ENCODE measurements at regions of chr11 and their contacts with region 1.

Region 1: DNA sequence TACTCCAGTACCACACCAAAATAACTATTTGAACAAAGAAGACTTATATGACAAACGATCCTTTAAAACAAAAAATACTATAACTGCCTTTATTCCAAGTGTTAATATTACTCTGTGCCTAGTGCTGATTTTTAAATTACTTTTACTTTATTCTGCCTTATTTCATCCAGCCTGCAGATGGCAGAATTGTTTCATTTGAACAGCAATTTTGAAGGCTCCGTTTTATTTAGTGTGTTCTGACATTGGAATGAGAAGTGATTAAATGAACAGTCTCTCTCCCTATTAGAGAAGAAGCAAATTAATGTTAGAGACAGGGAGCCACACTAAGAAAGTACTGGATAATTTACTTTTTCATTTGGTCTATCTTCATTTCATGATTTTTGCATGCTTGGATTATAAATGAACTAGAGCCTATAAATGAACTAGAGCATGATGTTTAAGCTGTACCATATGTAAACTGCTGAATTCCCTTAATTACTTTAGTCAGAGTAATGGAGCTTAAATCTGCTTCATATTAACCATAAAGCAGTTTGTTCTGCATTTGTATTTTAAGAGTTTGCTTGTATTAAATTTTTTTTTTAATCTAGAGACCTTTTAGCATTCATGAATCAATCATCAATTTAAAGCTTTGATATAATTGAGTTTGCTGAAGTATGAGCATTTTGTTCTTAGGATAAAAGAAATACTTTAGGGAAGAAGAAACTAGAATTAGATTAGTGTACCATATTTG is 9.8 kb downstream of the PDHX start:
- DNase-seq: no peak

Region 2: GRCh38 chr11:34825670-34826383 is 100.4 kb before region 1 on chr11:
- intact Hi-C with region 1: no loop called
- DNase-seq: no peak

Region 3: GRCh38 chr11:34860034-34860433 is 66.2 kb before region 1 on chr11:
- intact Hi-C with region 1: no loop called
- DNase-seq: no peak

Region 4: DNA sequence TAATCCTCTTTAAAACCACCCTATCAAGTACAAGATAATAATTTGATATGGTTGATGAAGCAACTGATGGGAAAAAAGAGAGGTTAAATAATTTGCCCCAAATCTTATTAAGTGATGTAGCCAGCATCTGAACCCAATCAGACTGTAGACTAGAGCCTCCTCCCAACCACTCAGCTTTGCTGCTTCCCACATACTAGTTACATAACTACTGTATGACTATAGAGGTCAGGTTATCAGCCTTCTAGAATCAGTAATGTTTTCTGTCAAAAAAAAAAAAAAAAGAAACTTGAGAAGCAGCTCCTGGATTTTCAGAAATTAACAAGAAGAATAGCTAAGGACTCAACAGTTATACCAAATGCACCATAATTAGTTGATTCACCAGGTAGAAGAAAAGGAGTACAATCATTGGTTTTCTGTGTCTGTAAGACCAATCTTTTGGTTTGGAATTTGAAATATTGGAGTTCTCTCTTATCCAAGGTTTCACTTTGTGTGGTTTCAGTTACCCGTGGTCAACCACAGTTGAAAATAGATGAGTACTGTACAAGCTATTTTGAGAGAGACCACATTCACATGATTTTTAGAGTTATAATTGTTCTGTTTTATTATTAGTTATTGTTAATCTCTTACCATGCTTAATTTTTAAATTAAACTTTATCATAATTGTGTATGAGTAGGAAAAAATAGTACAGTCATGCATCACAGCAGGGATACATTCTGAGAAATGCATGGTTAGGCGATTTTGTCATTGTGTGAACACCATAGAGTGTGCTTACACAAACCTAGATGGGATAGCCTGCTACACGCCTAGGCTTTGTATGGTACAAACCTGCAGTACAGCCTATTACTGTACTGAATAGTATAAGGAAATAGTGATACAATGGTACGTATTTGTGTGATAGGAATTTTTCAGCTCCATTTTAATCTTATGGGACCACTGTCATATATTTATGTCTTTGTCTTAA is 62.3 kb after region 1 on chr11:
- intact Hi-C with region 1: loop called (anchors 10 kb)
- DNase-seq: no peak

Region 5: DNA sequence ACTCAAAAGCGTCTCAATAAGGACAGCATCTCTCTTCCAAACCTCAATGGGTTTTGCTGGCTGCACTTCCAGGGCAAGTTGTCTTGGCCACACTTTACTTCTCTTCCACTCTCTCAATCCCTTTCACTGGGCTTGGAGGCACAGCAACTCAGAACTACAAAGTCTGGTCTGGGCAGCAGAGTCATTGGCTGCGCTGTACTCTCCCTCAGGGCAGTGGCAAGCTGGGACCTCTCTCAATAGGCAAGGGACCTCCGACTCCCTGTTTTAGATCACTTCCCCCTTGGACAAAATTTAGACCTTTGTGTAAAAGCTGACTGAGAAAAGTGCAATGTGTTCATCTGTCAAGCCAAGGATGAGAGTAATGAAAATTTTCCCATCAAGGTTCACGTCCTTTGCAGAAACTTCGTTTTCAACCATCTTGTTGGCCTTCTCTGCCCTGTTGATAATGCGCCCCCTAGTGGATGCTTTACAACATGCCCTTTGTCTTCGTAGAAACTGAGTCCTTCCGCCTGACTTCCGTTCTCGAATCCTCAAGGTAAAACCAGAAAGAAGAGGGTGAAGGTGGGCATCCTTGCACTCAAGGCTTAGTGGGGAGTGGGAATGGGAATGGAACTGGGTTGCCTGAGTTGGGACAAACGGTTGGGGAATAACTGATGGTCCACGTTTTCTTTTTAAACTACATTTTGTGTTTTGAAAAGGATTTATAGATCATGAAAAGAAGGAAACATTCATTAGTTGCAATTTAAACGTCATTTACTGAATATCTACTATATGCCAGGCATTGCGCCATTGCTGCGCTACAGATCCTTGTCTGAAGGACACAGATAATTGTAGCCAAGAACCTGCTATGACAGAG is 311.8 kb after region 1 on chr11:
- intact Hi-C with region 1: loop called (anchors 5 kb)
- DNase-seq: no peak

Region 6: DNA sequence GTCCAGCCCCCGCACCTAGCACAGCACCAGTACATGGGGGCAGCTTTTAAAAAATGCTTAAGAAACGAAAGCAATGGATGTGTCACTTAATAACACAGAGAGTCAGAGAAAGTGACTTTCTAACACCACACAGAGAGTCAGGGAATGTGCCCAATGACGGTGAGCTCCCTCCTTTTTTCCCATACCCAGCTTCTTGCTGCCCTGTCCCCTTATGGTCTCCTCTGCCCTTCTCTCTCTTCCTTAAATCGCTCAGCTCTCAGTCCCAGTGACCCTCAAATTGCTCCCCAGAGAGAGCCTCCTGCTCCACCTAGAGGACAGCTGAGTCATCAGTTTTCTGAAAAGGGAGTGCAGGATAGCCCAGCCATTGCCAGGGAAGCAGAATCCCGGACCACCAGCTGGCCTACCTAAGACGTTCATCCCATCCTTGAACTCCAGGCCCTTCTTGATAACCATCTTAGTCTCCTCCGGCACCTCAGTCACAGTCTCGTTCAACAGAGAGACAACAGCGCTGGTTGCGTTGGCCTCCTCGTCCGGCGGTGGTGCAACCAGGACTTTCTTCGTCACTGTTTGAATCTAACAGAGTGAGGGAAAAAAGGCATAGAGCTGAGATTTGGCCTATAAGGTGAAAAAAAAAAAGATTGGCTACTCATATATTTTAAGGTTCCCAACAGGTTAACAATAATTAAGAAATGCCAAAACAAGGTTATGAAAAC is 379.6 kb after region 1 on chr11:
- intact Hi-C with region 1: loop called (anchors 5 kb)
- DNase-seq: no peak

Measured in cardiac septum (tissue), 1 donor.